ENCODE measurements at regions of chr19 and their contacts with region 1.

Region 1: GRCh38 chr19:17932485-17933338 is at the start of gene CCDC124:
- DNase-seq: peak; percentile 96
- H3K4me3 Mint-ChIP-seq: peak within 1 kb of the TSS; percentile 91
- H3K27ac Mint-ChIP-seq: peak within 1 kb of the TSS; percentile 92
- H3K4me1 Mint-ChIP-seq: peaks cover 30% of the 10 kb centered on the region
- H3K27me3 Mint-ChIP-seq: no peaks in the 10 kb centered on the region
- total RNA-seq, gene CCDC124: 101 to 105 TPM

Region 2: GRCh38 chr19:17794731-17795536 is 137.8 kb before region 1 on chr19 and contains the start of gene B3GNT3:
- CTCF ChIA-PET with region 1: no interaction called
- POLR2A ChIA-PET with region 1: no interaction called
- intact Hi-C with region 1: loop called (anchors 5 kb)
- DNase-seq: no peak
- H3K4me3 Mint-ChIP-seq: no peak within 1 kb of the TSS
- H3K27ac Mint-ChIP-seq: no peak within 1 kb of the TSS
- H3K4me1 Mint-ChIP-seq: peaks cover 53% of the 10 kb centered on the region
- H3K27me3 Mint-ChIP-seq: peaks cover 5% of the 10 kb centered on the region
- total RNA-seq, gene B3GNT3: 0.26 to 0.34 TPM

Region 3: DNA sequence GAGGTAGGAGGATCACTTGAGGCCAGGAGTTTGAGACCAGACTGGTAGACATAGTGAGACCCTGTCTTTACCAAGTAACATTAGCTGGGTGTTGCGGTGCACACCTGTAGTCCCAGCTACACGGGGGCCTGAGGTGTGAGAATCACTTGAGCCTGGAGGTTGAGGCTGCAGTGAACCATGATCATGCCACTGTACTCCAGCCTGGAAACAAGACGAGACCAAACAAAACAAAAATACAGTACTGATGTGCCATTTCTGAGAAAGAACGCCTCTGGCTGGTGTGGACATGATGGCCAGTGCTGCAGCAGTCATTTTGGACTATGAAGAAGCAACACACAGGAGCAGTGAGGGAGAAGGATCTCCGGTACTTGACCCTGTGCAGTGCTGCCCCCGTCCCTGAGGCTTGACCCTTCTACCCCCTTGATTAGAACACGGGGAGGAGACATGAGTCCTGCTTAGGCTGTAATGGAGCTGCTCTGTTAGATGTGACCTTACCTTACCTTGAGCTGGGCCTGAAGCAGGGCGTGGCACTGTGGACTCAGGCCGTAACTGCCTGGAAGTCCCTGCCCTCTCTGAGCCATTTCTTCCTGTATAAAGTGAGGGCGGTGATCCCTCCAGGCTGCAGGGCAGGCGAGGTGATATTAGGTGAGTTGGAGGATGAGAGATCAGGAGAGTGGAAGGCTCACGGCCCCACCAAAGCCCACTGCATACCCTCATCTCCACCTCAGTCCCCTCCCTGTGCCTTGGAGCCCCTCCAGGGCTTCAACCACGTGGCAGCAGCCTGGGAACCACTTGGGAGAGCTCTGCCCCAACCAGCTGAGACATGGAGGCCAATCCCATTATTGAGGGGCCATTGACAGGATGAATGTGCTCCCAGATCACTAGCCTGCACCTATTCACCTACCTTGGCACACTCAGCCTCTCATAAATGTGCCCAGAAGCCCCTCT is 67.1 kb before region 1 on chr19:
- CTCF ChIA-PET with region 1: interaction called, 186 read pairs
- POLR2A ChIA-PET with region 1: interaction called, 93 read pairs
- intact Hi-C with region 1: no loop called
- DNase-seq: no peak
- H3K4me3 Mint-ChIP-seq: no peak overlapping the region
- H3K27ac Mint-ChIP-seq: peak overlapping the region; percentile 50
- H3K4me1 Mint-ChIP-seq: peaks cover 27% of the 10 kb centered on the region
- H3K27me3 Mint-ChIP-seq: no peaks in the 10 kb centered on the region

Region 4: DNA sequence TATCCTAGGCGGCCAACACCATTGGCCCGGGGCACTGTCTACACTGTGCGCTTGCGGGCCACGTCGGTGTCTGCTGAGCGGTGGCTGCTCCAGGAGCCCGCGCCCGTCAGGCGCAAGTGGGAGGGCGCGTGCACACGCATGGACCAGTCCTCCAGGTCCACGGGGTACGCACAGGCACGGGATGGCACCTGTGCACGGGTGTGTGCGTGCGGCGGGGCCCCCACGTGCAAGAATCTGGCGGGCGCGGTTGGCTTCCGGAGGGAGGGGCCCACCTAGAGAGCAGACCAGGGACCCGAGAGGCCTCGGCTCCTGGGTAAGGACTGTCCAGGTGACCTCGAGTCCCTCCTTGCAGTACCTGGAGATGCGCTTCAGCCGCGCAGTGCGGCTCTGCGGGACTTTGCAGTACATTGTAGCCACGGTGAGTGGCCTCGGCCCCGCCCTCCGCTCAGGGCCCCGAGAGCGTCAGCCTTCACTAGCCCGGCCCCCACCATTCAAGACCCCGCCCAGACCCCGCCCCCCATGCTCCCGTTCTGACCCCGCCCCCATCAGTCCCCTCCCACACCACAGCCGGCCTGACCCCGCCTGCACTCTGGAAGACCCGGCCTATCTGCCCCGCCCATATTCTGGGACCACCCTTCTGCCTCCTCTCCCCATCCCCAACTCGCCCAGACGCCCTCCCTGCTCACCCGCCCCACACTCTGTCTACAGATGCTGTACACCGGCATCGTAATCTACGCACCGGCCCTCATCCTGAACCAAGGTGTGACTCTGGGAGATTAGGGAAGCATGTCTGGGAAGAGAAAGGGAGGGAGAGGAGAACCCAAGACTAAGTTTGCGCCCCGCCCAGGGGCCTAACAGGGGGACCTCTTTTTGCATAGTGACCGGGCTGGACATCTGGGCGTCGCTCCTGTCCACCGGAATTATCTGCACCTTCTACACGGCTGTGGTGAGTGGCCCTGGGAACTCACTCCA is 58.6 kb before region 1 on chr19:
- CTCF ChIA-PET with region 1: interaction called, 42 read pairs
- POLR2A ChIA-PET with region 1: interaction called, 11 read pairs
- intact Hi-C with region 1: loop called (anchors 1 kb)
- DNase-seq: peak; percentile 84
- H3K4me3 Mint-ChIP-seq: peak overlapping the region; percentile 81
- H3K27ac Mint-ChIP-seq: no peak overlapping the region
- H3K4me1 Mint-ChIP-seq: peaks cover 17% of the 10 kb centered on the region
- H3K27me3 Mint-ChIP-seq: no peaks in the 10 kb centered on the region

Region 5: GRCh38 chr19:17947815-17948513 is 15.3 kb after region 1 on chr19:
- CTCF ChIA-PET with region 1: interaction called, 21 read pairs
- POLR2A ChIA-PET with region 1: interaction called, 5 read pairs
- intact Hi-C with region 1: no loop called
- DNase-seq: peak; percentile 96
- H3K4me3 Mint-ChIP-seq: peak overlapping the region; percentile 52
- H3K27ac Mint-ChIP-seq: peak overlapping the region; percentile 86
- H3K4me1 Mint-ChIP-seq: peaks cover 45% of the 10 kb centered on the region
- H3K27me3 Mint-ChIP-seq: peaks cover 38% of the 10 kb centered on the region

Region 6: DNA sequence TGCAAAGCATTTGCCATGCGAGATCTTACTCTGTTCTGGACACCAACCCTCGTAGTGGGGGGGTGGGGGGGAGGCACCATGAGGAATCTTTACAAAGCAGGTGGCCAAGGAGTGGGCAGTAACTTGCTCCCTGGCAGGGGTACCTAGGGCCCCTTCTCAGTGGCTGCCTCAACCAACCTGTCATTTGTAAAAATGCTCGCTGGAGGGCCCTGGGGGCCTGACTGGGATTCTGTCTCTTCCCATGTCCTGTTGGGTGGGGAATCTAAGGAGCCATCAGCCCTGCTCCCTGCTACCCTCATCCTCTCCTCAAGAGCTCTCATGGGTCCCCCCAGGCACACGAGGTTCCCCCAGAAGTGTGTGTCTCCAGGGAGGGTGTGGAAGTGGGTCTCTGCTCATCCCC is 35.6 kb after region 1 on chr19:
- CTCF ChIA-PET with region 1: no interaction called
- POLR2A ChIA-PET with region 1: no interaction called
- intact Hi-C with region 1: no loop called
- DNase-seq: no peak
- H3K4me3 Mint-ChIP-seq: no peak overlapping the region
- H3K27ac Mint-ChIP-seq: no peak overlapping the region
- H3K4me1 Mint-ChIP-seq: peaks cover 5% of the 10 kb centered on the region
- H3K27me3 Mint-ChIP-seq: peaks cover 38% of the 10 kb centered on the region

Region 7: GRCh38 chr19:18408053-18408476 is 475.4 kb after region 1 on chr19:
- CTCF ChIA-PET with region 1: no interaction called
- POLR2A ChIA-PET with region 1: no interaction called
- intact Hi-C with region 1: no loop called
- DNase-seq: peak; percentile 46
- H3K4me3 Mint-ChIP-seq: no peak overlapping the region
- H3K27ac Mint-ChIP-seq: no peak overlapping the region
- H3K4me1 Mint-ChIP-seq: peaks cover 5% of the 10 kb centered on the region
- H3K27me3 Mint-ChIP-seq: peaks cover 8% of the 10 kb centered on the region

Measured in activated CD4-positive, alpha-beta memory T cell treated with anti-CD3 and anti-CD28 coated beads for 36 hours (primary cell).